Dendritic cell treated with granulocyte-macrophage colony-stimulating factor and Interleukin-4, amounts not matched to agents 40 ng/mL and 50 ng/mL, for 4 days (primary cell): ENCODE measurements at regions of chrX and their contacts with region 1.

Region 1: GRCh38 chrX:101415180-101416145 is 7.4 kb downstream of the HNRNPH2 start:
- H3K4me3 Mint-ChIP-seq: no peak overlapping the region
- H3K27ac Mint-ChIP-seq: peak overlapping the region; percentile 30
- H3K4me1 Mint-ChIP-seq: peaks cover 59% of the 10 kb centered on the region
- H3K27me3 Mint-ChIP-seq: no peaks in the 10 kb centered on the region

Region 2: DNA sequence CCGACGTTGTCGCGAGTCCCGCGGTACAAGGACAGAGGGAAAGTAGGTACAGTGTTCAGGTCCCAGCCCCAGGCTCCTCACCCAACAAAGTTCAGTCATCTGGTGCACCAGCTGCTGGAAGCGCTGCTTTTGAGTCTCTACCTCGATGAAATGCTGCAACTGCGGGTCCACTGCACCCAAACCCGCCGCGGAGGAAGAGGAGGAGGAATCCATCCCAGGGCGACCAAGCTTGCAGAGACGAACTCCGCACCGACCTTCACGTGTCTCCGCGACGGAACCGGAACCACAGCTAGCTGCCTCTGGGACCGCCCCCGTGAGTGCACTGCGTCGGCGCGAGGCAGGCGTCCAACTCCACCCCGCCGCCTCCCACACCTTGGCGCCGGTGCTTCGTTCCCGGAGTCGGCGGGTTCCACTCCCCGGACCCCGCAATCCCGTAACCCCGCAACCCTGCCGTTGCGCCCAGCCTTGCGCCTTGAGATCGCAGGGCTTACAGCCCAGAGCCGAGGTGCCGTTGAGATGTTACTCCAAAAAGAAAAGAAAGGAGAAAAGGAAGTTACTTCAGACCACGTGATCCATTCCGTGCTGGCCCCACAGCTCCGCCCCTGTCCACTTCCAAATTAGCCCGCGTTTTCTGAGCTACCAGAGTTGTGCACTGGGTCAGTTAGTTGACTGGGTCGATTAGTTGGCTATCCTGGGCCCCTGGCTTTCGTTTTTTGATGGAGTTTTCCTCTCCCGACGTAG is 66.8 kb before region 1 on chrX and contains the start of gene TIMM8A:
- intact Hi-C with region 1: loop called (anchors 5 kb)
- H3K4me3 Mint-ChIP-seq: peak within 1 kb of the TSS; percentile 88
- H3K27ac Mint-ChIP-seq: peak within 1 kb of the TSS; percentile 92
- H3K4me1 Mint-ChIP-seq: no peaks in the 10 kb centered on the region
- H3K27me3 Mint-ChIP-seq: no peaks in the 10 kb centered on the region

Region 3: DNA sequence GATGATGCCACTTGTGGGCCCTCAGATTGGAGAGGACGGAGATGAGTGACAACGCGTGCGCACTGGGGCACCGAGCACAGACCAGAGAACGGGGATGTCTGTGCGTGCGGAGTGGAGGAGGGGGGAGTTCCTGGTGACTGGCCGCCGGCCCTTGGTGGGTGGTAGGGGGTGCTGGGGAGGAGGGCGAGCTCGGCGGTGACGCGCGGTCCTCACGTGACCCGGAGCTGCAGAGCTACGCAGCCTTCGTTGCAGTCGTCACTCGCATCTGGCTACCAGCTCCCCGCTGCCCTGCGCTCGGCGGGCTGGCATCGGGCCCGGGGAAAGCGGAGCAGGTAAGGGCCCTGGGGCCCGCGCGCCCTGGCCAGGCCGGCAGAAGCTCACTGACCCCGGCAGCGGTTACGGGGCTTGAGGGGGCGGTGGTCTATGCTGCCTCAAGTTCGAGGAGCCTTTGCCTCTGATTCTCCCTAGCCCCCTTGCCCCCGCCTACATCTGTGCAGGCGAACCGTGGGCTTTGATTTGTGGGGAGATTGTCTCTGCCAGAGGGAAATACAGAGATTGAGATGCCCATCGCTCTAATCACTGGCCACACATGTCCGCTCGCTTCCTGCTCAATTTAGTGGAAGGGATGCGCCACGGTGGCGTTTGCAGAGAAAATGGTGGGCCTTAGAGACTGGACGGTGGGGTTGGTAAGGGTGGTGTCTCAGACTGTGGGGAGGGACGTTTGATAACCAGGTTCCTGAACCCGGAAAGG is 69.9 kb after region 1 on chrX and contains the start of gene ARMCX4:
- intact Hi-C with region 1: no loop called
- H3K4me3 Mint-ChIP-seq: peak within 1 kb of the TSS; percentile 63
- H3K27ac Mint-ChIP-seq: no peak within 1 kb of the TSS
- H3K4me1 Mint-ChIP-seq: peaks cover 9% of the 10 kb centered on the region
- H3K27me3 Mint-ChIP-seq: peaks cover 15% of the 10 kb centered on the region

Region 4: DNA sequence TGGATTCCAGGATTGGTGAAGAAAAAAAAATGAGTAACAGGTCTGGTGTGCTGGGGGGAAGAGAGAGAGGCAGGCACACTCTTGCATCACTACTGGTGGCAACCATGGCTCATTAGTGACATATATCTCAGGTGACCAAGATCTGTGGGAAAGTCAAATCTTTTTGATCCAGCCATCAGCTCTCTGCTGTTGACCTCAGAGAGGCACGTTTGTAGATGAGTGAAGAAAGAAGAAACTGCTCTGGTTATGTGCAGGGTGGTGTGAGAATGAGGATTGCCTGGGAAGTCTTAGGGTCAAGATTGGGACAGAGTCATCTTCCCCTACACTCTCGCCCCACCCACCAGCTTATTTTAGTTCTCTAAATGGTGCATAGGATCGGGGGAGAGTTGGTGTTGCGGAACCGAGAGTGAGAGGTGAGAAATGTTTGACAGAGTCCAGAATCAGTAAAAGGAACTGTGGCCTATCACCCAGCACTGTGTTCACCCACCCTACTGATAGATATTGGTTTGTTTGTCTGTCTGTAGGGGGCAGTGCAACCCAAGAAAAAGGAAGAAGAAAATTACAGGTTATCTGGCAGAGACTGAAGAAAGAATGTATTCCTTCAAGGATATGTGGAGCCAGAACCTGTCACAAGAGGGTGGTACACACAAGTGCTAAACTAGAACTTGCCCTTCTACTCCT is 180.4 kb after region 1 on chrX:
- intact Hi-C with region 1: loop called (anchors 5 kb)
- H3K4me3 Mint-ChIP-seq: no peak overlapping the region
- H3K27ac Mint-ChIP-seq: no peak overlapping the region
- H3K4me1 Mint-ChIP-seq: peaks cover 9% of the 10 kb centered on the region
- H3K27me3 Mint-ChIP-seq: peaks cover 8% of the 10 kb centered on the region

Region 5: GRCh38 chrX:101617211-101618191 is 202.0 kb after region 1 on chrX and contains the start of gene ARMCX6:
- intact Hi-C with region 1: loop called (anchors 5 kb)
- H3K4me3 Mint-ChIP-seq: peak within 1 kb of the TSS; percentile 84
- H3K27ac Mint-ChIP-seq: peak within 1 kb of the TSS; percentile 83
- H3K4me1 Mint-ChIP-seq: peaks cover 11% of the 10 kb centered on the region
- H3K27me3 Mint-ChIP-seq: peaks cover 2% of the 10 kb centered on the region

Region 6: GRCh38 chrX:101799387-101799786 is 383.9 kb after region 1 on chrX:
- intact Hi-C with region 1: loop called (anchors 2 kb)
- H3K4me3 Mint-ChIP-seq: no peak overlapping the region
- H3K27ac Mint-ChIP-seq: no peak overlapping the region
- H3K4me1 Mint-ChIP-seq: no peaks in the 10 kb centered on the region
- H3K27me3 Mint-ChIP-seq: no peaks in the 10 kb centered on the region

Region 7: GRCh38 chrX:101931488-101932248 is 516.2 kb after region 1 on chrX and contains the start of gene ZMAT1:
- intact Hi-C with region 1: loop called (anchors 5 kb)
- H3K4me3 Mint-ChIP-seq: peak within 1 kb of the TSS; percentile 76
- H3K27ac Mint-ChIP-seq: peak within 1 kb of the TSS; percentile 77
- H3K4me1 Mint-ChIP-seq: peaks cover 8% of the 10 kb centered on the region
- H3K27me3 Mint-ChIP-seq: no peaks in the 10 kb centered on the region